ENCODE measurements at regions of chr12 and their contacts with region 1.

Region 1: DNA sequence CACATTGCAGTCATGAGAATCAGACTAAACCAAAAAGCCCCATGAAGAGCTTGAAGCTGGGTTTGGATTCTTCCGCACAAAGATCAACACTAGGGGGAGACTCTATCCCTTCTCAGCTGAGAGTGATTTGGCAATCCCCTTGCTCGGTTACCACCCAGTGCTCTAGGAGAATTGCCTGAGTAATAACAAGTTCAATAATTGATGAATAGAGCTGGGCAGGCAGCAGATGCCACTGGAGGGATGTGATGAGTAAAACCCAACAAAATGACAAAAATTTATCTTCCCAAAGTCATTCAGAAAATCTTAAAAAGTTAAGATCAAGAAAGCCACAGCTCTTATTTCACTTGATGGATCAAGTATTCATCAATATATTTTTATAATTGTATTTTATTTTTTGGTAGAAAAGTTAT is 185.6 kb upstream of the ARID2 start:
- DNase-seq: peak; percentile 70
- H3K4me3 Mint-ChIP-seq: no peak overlapping the region
- H3K27ac Mint-ChIP-seq: no peak overlapping the region
- H3K4me1 Mint-ChIP-seq: no peaks in the 10 kb centered on the region
- H3K27me3 Mint-ChIP-seq: peaks cover 6% of the 10 kb centered on the region

Region 2: GRCh38 chr12:45130881-45131281 is 413.0 kb before region 1 on chr12:
- CTCF ChIA-PET with region 1: interaction called, 5 read pairs
- intact Hi-C with region 1: loop called (anchors 1 kb)
- DNase-seq: peak; percentile 72
- H3K4me3 Mint-ChIP-seq: no peak overlapping the region
- H3K27ac Mint-ChIP-seq: no peak overlapping the region
- H3K4me1 Mint-ChIP-seq: no peaks in the 10 kb centered on the region
- H3K27me3 Mint-ChIP-seq: peaks cover 10% of the 10 kb centered on the region

Region 3: DNA sequence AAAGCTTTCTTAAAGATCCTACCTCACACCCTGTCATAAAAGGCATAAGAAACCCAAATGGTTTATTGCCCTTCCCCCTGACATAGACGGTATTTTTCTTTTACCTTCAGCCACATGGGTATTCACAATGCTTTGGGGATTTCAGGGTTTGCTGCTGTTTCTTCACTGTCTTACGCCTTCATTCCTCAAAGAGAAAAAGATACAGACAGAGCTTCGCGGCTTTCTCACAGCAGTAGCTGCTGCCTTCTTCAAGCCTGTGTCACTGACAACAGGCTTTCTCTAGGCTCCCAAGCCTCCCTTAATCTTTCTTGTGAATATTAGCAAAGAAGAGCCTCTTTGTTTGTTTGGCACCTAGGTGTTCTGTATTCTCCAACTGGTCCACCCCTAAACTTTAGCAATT is 11.8 kb before region 1 on chr12:
- CTCF ChIA-PET with region 1: interaction called, 14 read pairs
- intact Hi-C with region 1: no loop called
- DNase-seq: no peak
- H3K4me3 Mint-ChIP-seq: no peak overlapping the region
- H3K27ac Mint-ChIP-seq: no peak overlapping the region
- H3K4me1 Mint-ChIP-seq: no peaks in the 10 kb centered on the region
- H3K27me3 Mint-ChIP-seq: no peaks in the 10 kb centered on the region

Region 4: DNA sequence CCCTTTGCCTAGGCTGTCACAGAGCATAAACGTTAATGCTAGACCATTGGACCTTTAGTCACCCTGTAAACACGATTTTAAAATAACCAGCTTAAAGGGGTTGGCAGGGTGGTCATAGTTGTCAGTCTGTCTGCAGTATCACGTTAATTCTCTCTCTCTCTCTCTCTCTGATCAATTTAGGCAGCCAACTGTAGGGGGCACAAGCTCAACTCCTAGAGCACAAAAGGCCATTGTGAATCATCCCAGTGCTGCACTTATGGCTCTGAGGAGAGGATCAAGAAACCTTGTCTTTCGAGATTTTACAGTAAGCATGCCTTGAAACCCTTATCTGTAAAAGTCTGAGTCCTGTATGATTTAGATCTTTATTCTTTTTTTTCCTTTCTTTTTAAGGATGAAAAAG is 349.3 kb after region 1 on chr12:
- CTCF ChIA-PET with region 1: interaction called, 5 read pairs
- intact Hi-C with region 1: loop called (anchors 10 kb)
- DNase-seq: peak; percentile 19
- H3K4me3 Mint-ChIP-seq: no peak overlapping the region
- H3K27ac Mint-ChIP-seq: no peak overlapping the region
- H3K4me1 Mint-ChIP-seq: peaks cover 35% of the 10 kb centered on the region
- H3K27me3 Mint-ChIP-seq: no peaks in the 10 kb centered on the region

Region 5: GRCh38 chr12:45973526-45973925 is 429.6 kb after region 1 on chr12:
- CTCF ChIA-PET with region 1: no interaction called
- intact Hi-C with region 1: no loop called
- DNase-seq: no peak
- H3K4me3 Mint-ChIP-seq: no peak overlapping the region
- H3K27ac Mint-ChIP-seq: no peak overlapping the region
- H3K4me1 Mint-ChIP-seq: peaks cover 57% of the 10 kb centered on the region
- H3K27me3 Mint-ChIP-seq: no peaks in the 10 kb centered on the region

Region 6: DNA sequence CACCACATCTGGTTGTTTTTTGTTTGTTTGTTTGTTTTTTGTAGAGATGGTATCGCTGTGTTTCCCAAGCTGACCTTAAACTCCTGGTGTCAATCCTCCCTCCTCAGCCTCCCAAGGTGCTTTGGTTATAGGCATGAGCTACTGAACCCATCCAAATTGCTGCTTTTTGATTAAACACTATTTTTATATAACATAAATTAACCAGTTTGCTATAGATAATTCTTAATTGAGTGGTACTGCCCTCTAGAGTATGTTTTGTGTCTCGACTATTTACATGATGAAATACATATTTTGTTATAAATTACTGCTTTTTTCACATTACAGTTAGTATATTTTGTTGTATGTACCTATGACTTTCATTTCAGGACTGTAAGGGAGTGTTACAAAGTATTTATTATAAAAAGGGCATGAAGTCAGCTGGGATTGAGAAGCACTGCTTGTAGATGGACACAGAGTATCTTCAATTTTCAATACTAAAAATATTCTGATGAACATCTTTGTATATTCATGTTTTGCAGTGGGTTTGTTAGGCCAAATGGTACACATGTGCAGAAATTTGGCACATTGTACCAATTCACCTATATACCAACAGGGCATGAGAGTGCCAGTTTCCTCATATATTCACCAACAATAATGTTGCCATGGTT is 461.4 kb after region 1 on chr12:
- CTCF ChIA-PET with region 1: no interaction called
- intact Hi-C with region 1: loop called (anchors 1 kb)
- DNase-seq: no peak
- H3K4me3 Mint-ChIP-seq: no peak overlapping the region
- H3K27ac Mint-ChIP-seq: no peak overlapping the region
- H3K4me1 Mint-ChIP-seq: no peaks in the 10 kb centered on the region
- H3K27me3 Mint-ChIP-seq: no peaks in the 10 kb centered on the region

Measured in activated naive CD4-positive, alpha-beta T cell treated with anti-CD3 and anti-CD28 coated beads for 36 hours (primary cell).